ENCODE measurements at regions of chr6 and their contacts with region 1.

Region 1: DNA sequence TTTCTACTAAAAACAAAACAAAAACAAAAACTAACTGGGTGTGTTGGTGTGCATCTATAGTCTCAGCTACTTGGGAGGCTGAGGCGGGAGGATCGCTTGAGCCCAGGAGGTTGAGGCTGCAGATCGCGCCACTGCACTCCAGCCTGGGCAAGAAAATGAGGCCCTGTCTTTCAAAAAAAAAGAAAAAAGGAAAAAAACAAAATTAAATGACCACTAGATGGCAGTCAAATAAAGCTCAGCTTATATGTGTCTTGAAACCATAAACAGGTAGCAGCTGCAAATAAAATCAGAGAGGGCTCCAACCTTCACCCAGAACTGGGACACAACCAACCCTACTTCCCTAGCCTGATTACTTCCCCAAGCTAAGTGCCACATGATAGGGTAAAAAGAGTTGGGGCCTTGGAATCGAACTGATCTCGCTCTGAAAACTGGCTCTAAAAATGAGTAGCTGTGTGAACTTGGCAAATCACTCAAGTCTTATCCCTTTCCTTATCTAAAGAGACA is 67.1 kb upstream of the ADGRF4 start:
- DNase-seq: no peak
- ATAC-seq: peak; percentile 49 to 73 (median 67)
- H3K4me3 ChIP-seq: no peak overlapping the region
- H3K27ac ChIP-seq: peak overlapping the region in 3 of 12 donors; percentile 2 to 15 (median 8)
- H3K4me1 ChIP-seq: peaks cover 0 to 25% (median 16%) of the 10 kb centered on the region in 12 donors
- H3K27me3 ChIP-seq: no peaks in the 10 kb centered on the region
- CTCF ChIP-seq: peak; percentile 53 to 84 (median 71)
- POLR2A ChIP-seq: no peak

Region 2: GRCh38 chr6:47733879-47734558 is 102.7 kb after region 1 on chr6:
- intact Hi-C with region 1: loop called (anchors 1 to 5 kb)
- DNase-seq: no peak
- ATAC-seq: peak in 1 of 4 donors; percentile 39
- H3K4me3 ChIP-seq: no peak overlapping the region
- H3K27ac ChIP-seq: no peak overlapping the region
- H3K4me1 ChIP-seq: peaks cover 0 to 15% (median 2%) of the 10 kb centered on the region in 12 donors
- H3K27me3 ChIP-seq: no peaks in the 10 kb centered on the region
- CTCF ChIP-seq: peak; percentile 28 to 61 (median 44)
- POLR2A ChIP-seq: no peak

Region 3: GRCh38 chr6:47780510-47781356 is 149.4 kb after region 1 on chr6:
- intact Hi-C with region 1: loop called (anchors 1 to 2 kb)
- DNase-seq: peak in 2 of 5 donors; percentile 14 to 28
- ATAC-seq: peak in 3 of 4 donors; percentile 84 to 86 (median 86)
- H3K4me3 ChIP-seq: peak overlapping the region in 1 of 12 donors; percentile 19
- H3K27ac ChIP-seq: no peak overlapping the region
- H3K4me1 ChIP-seq: peaks cover 0 to 7% (median 3%) of the 10 kb centered on the region in 12 donors
- H3K27me3 ChIP-seq: no peaks in the 10 kb centered on the region
- CTCF ChIP-seq: peak; percentile 48 to 78 (median 63)
- POLR2A ChIP-seq: no peak

Measured in heart left ventricle (tissue), 16 donors.